Naive thymus-derived CD4-positive, alpha-beta T cell (primary cell): ENCODE measurements at regions of chr17 and their contacts with region 1.

Region 1: DNA sequence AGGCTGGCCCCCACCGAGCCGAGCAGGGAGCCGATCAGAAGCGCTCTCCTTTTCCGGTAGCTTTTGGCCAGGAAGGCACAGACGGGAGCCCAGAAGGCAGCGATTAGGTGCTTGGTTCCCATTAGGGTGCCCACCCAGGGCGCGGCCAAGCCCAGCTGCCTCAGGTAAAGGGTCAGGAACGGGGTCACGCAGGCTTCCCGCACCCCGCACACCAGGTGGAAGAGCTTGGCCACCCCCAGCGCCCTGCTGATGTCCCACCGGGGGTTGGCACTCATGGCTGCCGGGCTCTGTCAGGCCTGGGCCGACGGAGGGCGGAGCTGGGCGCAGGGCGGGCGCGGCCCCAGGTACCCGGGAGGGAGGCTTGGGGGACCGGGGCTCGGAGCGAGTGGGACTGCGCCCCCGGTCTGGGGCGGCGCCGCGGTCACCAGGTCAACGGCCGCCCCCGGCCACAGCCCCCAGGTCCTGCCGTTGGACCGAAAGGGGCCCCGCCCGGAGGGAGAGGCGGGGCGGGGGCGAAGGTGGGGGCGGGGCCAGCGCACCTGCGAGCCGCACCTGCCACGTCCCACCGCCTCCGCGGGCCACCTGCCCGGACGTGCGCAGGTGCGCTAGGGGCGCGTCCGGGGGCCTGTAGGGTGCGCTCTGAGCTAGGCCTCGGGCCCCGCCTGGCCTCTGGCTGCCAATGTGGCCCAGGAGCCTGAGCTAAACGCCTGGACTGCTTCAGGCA is at the start of gene MFSD6L:
- DNase-seq: no peak
- ATAC-seq: no peak
- H3K4me3 ChIP-seq: no peak within 1 kb of the TSS
- H3K4me3 Mint-ChIP-seq: no peak within 1 kb of the TSS
- H3K27ac ChIP-seq: no peak within 1 kb of the TSS
- H3K27ac Mint-ChIP-seq: peak within 1 kb of the TSS in 1 of 9 donors; percentile 25
- H3K4me1 ChIP-seq: no peaks in the 10 kb centered on the region
- H3K4me1 Mint-ChIP-seq: peaks cover 0 to 4% (median 0%) of the 10 kb centered on the region in 7 donors
- H3K27me3 ChIP-seq: no peaks in the 10 kb centered on the region
- H3K27me3 Mint-ChIP-seq: peaks cover 0 to 4% (median 0%) of the 10 kb centered on the region in 5 donors
- total RNA-seq, gene MFSD6L: 0.96 to 1.8 TPM in 2 of 5 experiments, not detected in the others

Region 2: GRCh38 chr17:7897773-7898172 is 901.2 kb before region 1 on chr17:
- CTCF ChIA-PET with region 1: no interaction called
- POLR2A ChIA-PET with region 1: no interaction called
- intact Hi-C with region 1: no loop called
- DNase-seq: peak in 4 of 9 donors; percentile 33 to 42 (median 36)
- ATAC-seq: peak; percentile 75
- H3K4me3 ChIP-seq: no peak overlapping the region
- H3K4me3 Mint-ChIP-seq: no peak overlapping the region
- H3K27ac ChIP-seq: no peak overlapping the region
- H3K27ac Mint-ChIP-seq: peak overlapping the region in 8 of 9 donors; percentile 0 to 92 (median 78)
- H3K4me1 ChIP-seq: no peaks in the 10 kb centered on the region
- H3K4me1 Mint-ChIP-seq: peaks cover 8 to 27% (median 15%) of the 10 kb centered on the region in 7 donors
- H3K27me3 ChIP-seq: no peaks in the 10 kb centered on the region
- H3K27me3 Mint-ChIP-seq: no peaks in the 10 kb centered on the region

Region 3: DNA sequence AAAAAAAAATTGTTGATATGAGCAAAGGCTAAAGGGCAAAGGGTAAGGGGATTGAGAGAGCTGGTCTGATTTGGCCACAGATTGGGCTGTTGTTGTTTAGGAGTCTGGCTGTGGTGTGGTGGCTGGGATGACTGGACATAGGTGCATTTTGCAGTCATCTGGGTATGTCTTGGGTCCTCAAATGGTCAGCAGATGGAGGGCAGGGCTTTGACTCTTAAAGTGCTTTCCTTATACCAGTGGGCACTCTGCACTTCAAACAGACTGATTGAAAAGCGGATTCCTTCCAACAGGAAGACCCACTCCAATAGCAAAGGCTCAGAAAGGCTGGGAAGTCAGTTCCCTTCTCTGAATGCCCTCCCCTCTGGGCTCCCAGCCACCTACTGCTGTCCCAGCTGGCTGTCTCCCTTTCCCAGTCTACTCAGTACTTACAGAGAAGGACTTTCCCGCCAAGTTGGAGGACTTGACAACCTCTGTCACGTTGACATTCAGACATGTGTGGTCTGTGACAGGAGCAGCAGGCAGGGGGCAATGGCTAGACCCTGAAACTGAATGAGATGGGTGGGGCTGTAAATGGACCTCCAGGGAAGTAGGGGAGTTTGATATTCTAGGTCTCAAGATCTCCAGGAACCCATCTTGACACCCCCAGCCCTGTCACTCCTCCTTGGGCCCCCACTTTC is 19.8 kb after region 1 on chr17:
- CTCF ChIA-PET with region 1: no interaction called
- POLR2A ChIA-PET with region 1: no interaction called
- intact Hi-C with region 1: loop called in 1 of 2 experiments (anchors 1 kb)
- DNase-seq: peak in 1 of 9 donors; percentile 13
- ATAC-seq: no peak
- H3K4me3 ChIP-seq: no peak overlapping the region
- H3K4me3 Mint-ChIP-seq: no peak overlapping the region
- H3K27ac ChIP-seq: no peak overlapping the region
- H3K27ac Mint-ChIP-seq: no peak overlapping the region
- H3K4me1 ChIP-seq: no peaks in the 10 kb centered on the region
- H3K4me1 Mint-ChIP-seq: no peaks in the 10 kb centered on the region
- H3K27me3 ChIP-seq: no peaks in the 10 kb centered on the region
- H3K27me3 Mint-ChIP-seq: peaks cover 0 to 7% (median 0%) of the 10 kb centered on the region in 5 donors